GM12878 (cell line): ENCODE measurements at regions of chr10 and their contacts with region 1.

Region 1: GRCh38 chr10:511101-511848 is 178.2 kb downstream of the DIP2C start:
- DNase-seq: peak; percentile 36
- ATAC-seq: peak; percentile 88
- H3K4me3 ChIP-seq: no peak overlapping the region
- H3K27ac ChIP-seq: no peak overlapping the region
- H3K4me1 ChIP-seq: peaks cover 11% of the 10 kb centered on the region
- H3K27me3 ChIP-seq: no peaks in the 10 kb centered on the region
- CTCF ChIP-seq: peak; percentile 91 to 96 (median 96)
- EP300 ChIP-seq: no peak
- POLR2A ChIP-seq: no peak
- RAD21 ChIP-seq: peak; percentile 74

Region 2: GRCh38 chr10:178208-178607 is 333.1 kb before region 1 on chr10:
- CTCF ChIA-PET with region 1: no interaction called
- POLR2A ChIA-PET with region 1: no interaction called
- RAD21 ChIA-PET with region 1: no interaction called
- SMC1A ChIA-PET with region 1: no interaction called
- in situ Hi-C with region 1: no loop called
- intact Hi-C with region 1: loop called (anchors 5 kb)
- DNase-seq: no peak
- ATAC-seq: peak; percentile 46; the same call in 2 of the 3 replicates
- H3K4me3 ChIP-seq: no peak overlapping the region
- H3K27ac ChIP-seq: no peak overlapping the region
- H3K4me1 ChIP-seq: no peaks in the 10 kb centered on the region; the same call in 1 of the 2 replicates
- H3K27me3 ChIP-seq: no peaks in the 10 kb centered on the region
- CTCF ChIP-seq: peak; percentile 21 to 51 (median 28); a peak in 5 of 6 replicates
- EP300 ChIP-seq: no peak
- POLR2A ChIP-seq: no peak
- RAD21 ChIP-seq: peak; percentile 45

Region 3: DNA sequence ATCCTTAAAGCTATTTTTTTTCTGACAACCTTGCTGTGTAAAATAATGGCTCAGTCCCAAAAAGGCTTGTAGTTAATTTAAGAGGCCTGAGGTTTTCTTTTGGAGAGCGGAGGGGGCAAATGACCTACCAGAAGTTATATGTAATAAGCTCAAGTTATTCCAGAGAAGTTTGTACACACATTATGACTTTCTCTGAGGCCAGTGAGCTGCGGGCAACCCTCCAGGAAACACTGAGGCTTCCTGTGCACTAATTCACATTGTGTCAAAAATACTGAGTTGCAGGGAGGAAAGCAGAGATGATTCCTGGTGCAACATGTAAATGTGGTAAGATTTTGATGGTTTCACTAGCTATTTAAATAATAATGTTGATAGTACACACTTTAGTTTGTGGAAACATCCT is 10.4 kb before region 1 on chr10:
- CTCF ChIA-PET with region 1: no interaction called
- POLR2A ChIA-PET with region 1: no interaction called
- RAD21 ChIA-PET with region 1: no interaction called
- SMC1A ChIA-PET with region 1: no interaction called
- in situ Hi-C with region 1: no loop called
- intact Hi-C with region 1: no loop called
- DNase-seq: no peak
- ATAC-seq: no peak
- H3K4me3 ChIP-seq: no peak overlapping the region
- H3K27ac ChIP-seq: no peak overlapping the region
- H3K4me1 ChIP-seq: no peaks in the 10 kb centered on the region
- H3K27me3 ChIP-seq: peaks cover 0 to 2% of the 10 kb centered on the region in 2 experiments; a peak in 3 of 4 replicates
- CTCF ChIP-seq: no peak
- EP300 ChIP-seq: no peak
- POLR2A ChIP-seq: no peak
- RAD21 ChIP-seq: no peak

Region 4: DNA sequence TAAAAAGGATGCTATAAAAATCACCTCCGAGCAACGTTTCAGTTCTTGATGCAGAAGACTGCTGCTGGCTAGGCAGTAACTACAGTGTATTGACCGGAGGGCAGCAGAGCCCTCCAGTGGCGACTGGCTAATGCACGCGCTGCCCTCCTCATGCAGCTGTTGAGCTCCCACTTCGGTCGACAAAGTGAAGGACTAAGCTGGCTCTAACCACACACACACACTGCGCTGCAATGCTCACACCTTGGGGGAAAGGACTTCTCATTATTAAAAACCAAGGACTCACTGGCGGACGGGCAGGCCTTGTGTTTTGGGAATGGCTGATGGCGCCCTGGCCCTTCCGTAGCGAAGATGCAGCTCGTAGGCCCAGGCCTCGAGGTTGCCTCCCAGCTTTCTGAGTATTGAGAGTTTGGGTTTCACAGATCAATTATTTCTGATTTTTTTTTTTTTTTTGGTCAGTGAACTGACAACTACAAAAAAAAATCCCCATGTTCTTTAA is 299.1 kb after region 1 on chr10:
- CTCF ChIA-PET with region 1: no interaction called
- POLR2A ChIA-PET with region 1: no interaction called
- RAD21 ChIA-PET with region 1: interaction called, 3 read pairs
- SMC1A ChIA-PET with region 1: no interaction called
- in situ Hi-C with region 1: no loop called
- intact Hi-C with region 1: loop called (anchors 1 kb)
- DNase-seq: no peak
- ATAC-seq: peak; percentile 57
- H3K4me3 ChIP-seq: no peak overlapping the region
- H3K27ac ChIP-seq: no peak overlapping the region
- H3K4me1 ChIP-seq: no peaks in the 10 kb centered on the region
- H3K27me3 ChIP-seq: no peaks in the 10 kb centered on the region
- CTCF ChIP-seq: peak; percentile 27 to 42 (median 40); a peak in 4 of 6 replicates
- EP300 ChIP-seq: no peak
- POLR2A ChIP-seq: no peak
- RAD21 ChIP-seq: peak; percentile 37; the same call in 1 of the 2 replicates

Region 5: GRCh38 chr10:1074748-1075308 is 563.6 kb after region 1 on chr10:
- CTCF ChIA-PET with region 1: no interaction called
- POLR2A ChIA-PET with region 1: no interaction called
- RAD21 ChIA-PET with region 1: no interaction called
- SMC1A ChIA-PET with region 1: no interaction called
- in situ Hi-C with region 1: loop called (anchors 10 kb)
- intact Hi-C with region 1: loop called (anchors 10 kb)
- DNase-seq: no peak
- ATAC-seq: no peak
- H3K4me3 ChIP-seq: no peak overlapping the region
- H3K27ac ChIP-seq: no peak overlapping the region
- H3K4me1 ChIP-seq: no peaks in the 10 kb centered on the region
- H3K27me3 ChIP-seq: no peaks in the 10 kb centered on the region
- CTCF ChIP-seq: peak; percentile 23 to 51 (median 32); a peak in 4 of 6 replicates
- EP300 ChIP-seq: no peak
- POLR2A ChIP-seq: no peak
- RAD21 ChIP-seq: peak; percentile 39